IMR-90 (cell line): ENCODE measurements at regions of chrX and their contacts with region 1.

Region 1: GRCh38 chrX:9682456-9682855 is 83.2 kb downstream of the GPR143 start:
- DNase-seq: peak; percentile 61
- ATAC-seq: peak; percentile 81
- H3K4me3 ChIP-seq: no peak overlapping the region
- H3K27ac ChIP-seq: no peak overlapping the region
- H3K4me1 ChIP-seq: peaks cover 2% of the 10 kb centered on the region; the same call in 1 of the 2 replicates
- H3K27me3 ChIP-seq: no peaks in the 10 kb centered on the region
- CTCF ChIP-seq: peak; percentile 49
- POLR2A ChIP-seq: no peak
- RAD21 ChIP-seq: peak; percentile 63

Region 2: DNA sequence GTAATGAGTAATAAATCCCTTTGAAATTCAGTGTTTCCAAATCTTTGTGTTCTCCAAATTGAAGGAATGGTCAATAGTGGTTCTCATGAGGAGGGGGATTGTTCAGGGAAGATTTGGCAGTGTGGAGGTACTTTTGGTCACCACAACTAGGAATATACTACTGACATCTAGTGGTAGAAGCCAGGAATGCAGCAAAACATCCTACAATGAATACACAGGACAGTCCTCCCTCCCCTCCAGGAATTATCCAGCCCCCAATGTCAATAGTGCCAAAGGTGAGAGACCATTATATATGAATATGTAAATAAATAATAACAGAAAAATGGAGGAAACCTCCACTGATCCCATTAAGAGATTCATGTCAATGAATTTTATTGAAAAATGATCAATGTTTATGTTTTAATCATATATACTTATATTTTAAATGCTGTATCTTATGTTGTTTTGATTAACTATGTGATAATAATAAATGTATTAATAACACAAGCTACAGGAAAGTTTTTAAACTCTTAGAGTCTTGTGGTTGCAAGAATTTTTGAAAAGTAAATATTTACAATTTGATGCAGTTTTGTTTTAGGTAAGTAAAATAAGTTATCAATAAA is 866.9 kb before region 1 on chrX:
- CTCF ChIA-PET with region 1: no interaction called
- POLR2A ChIA-PET with region 1: no interaction called
- dilution Hi-C with region 1: no loop called
- in situ Hi-C with region 1: loop called (anchors 10 kb)
- intact Hi-C with region 1: loop called (anchors 1 kb)
- DNase-seq: peak; percentile 40
- ATAC-seq: peak; percentile 88
- H3K4me3 ChIP-seq: no peak overlapping the region
- H3K27ac ChIP-seq: no peak overlapping the region
- H3K4me1 ChIP-seq: no peaks in the 10 kb centered on the region
- H3K27me3 ChIP-seq: no peaks in the 10 kb centered on the region; the same call in 1 of the 2 replicates
- CTCF ChIP-seq: peak; percentile 67
- POLR2A ChIP-seq: no peak
- RAD21 ChIP-seq: peak; percentile 63

Region 3: DNA sequence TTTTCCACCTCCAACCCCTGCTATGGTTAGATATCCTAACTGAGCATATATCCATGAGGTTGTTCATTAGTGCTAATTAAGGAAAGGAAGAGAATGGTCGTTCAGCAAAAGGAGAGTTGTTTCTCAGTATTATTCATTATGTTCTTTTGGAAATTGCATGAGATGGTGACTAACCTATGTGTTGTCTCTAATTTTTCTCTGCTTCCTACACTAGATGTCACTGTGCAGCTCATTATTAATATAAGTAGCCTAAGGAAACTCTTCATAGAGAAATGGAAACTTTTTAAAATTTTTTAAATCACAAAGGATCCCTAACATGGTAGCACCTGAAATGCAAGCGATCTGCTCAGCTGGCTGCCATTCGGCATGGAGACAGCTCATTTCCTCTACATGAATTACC is 813.5 kb before region 1 on chrX:
- CTCF ChIA-PET with region 1: no interaction called
- POLR2A ChIA-PET with region 1: no interaction called
- dilution Hi-C with region 1: no loop called
- in situ Hi-C with region 1: no loop called
- intact Hi-C with region 1: loop called (anchors 2 kb)
- DNase-seq: peak; percentile 46
- ATAC-seq: peak; percentile 74
- H3K4me3 ChIP-seq: no peak overlapping the region
- H3K27ac ChIP-seq: peak overlapping the region; percentile 81
- H3K4me1 ChIP-seq: peaks cover 6% of the 10 kb centered on the region
- H3K27me3 ChIP-seq: no peaks in the 10 kb centered on the region
- CTCF ChIP-seq: peak; percentile 48
- POLR2A ChIP-seq: no peak
- RAD21 ChIP-seq: peak; percentile 17

Region 4: GRCh38 chrX:8971116-8971515 is 711.3 kb before region 1 on chrX:
- CTCF ChIA-PET with region 1: no interaction called
- POLR2A ChIA-PET with region 1: no interaction called
- dilution Hi-C with region 1: no loop called
- in situ Hi-C with region 1: loop called (anchors 10 kb)
- intact Hi-C with region 1: loop called (anchors 1 kb)
- DNase-seq: peak; percentile 67
- ATAC-seq: peak; percentile 92
- H3K4me3 ChIP-seq: no peak overlapping the region
- H3K27ac ChIP-seq: no peak overlapping the region
- H3K4me1 ChIP-seq: no peaks in the 10 kb centered on the region
- H3K27me3 ChIP-seq: no peaks in the 10 kb centered on the region
- CTCF ChIP-seq: peak; percentile 51
- POLR2A ChIP-seq: no peak
- RAD21 ChIP-seq: peak; percentile 69

Region 5: GRCh38 chrX:9464435-9465371 is 217.8 kb before region 1 on chrX and contains the start of gene TBL1X:
- CTCF ChIA-PET with region 1: no interaction called
- POLR2A ChIA-PET with region 1: no interaction called
- dilution Hi-C with region 1: no loop called
- in situ Hi-C with region 1: no loop called
- intact Hi-C with region 1: loop called (anchors 5 kb)
- DNase-seq: peak; percentile 19
- ATAC-seq: peak; percentile 69
- H3K4me3 ChIP-seq: peak within 1 kb of the TSS; percentile 60
- H3K27ac ChIP-seq: peak within 1 kb of the TSS; percentile 86
- H3K4me1 ChIP-seq: peaks cover 3% of the 10 kb centered on the region; the same call in 1 of the 2 replicates
- H3K27me3 ChIP-seq: no peaks in the 10 kb centered on the region
- CTCF ChIP-seq: no peak
- POLR2A ChIP-seq: no peak
- RAD21 ChIP-seq: no peak
- total RNA-seq, gene TBL1X: 20.8 and 21.1 TPM in 2 replicates